PC-3 (cell line): ENCODE measurements at regions of chr3 and their contacts with region 1.

Region 1: DNA sequence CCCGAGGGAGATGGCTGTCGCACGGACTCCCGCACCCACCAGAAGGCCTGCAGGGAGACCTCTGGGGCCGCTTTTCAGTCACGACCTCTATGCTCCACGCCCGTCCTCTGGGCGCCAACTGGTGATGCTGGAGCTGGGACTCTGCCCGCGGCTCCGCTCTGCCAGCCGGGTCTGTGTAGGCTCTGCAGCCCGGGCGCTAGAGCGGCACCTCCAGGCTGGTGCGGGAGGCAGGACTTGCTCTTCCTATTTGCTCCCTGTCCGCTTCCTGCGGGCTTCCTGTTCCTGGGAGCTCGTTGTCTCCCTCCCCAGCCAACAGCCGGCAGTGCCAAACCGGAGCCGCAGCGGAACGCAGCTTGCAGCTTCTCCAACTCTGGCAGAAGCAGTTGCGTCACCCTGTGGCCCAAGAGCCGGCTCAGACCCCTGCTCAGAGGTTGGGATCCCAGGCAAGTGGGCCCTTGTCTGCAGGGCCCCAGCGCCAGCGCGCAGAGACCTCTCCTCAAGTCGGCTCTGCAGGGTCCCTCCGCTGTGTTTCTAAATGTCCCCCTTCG is 285.9 kb downstream of the XXYLT1 start:
- DNase-seq: peak; percentile 86
- ATAC-seq: peak; percentile 84
- H3K4me3 ChIP-seq: peak overlapping the region; percentile 51; the same call in 1 of the 2 replicates
- H3K27ac ChIP-seq: peak overlapping the region; percentile 10; the same call in 1 of the 2 replicates
- H3K4me1 ChIP-seq: peaks cover 43% of the 10 kb centered on the region
- H3K27me3 ChIP-seq: no peaks in the 10 kb centered on the region
- CTCF ChIP-seq: peak; percentile 68

Region 2: GRCh38 chr3:194583604-194584318 is 401.3 kb before region 1 on chr3:
- CTCF ChIA-PET with region 1: no interaction called
- POLR2A ChIA-PET with region 1: no interaction called
- intact Hi-C with region 1: no loop called
- DNase-seq: peak; percentile 96
- ATAC-seq: peak; percentile 82
- H3K4me3 ChIP-seq: peak overlapping the region; percentile 98
- H3K27ac ChIP-seq: peak overlapping the region; percentile 82
- H3K4me1 ChIP-seq: peaks cover 39% of the 10 kb centered on the region
- H3K27me3 ChIP-seq: no peaks in the 10 kb centered on the region
- CTCF ChIP-seq: no peak

Region 3: GRCh38 chr3:194906229-194906629 is 78.9 kb before region 1 on chr3:
- CTCF ChIA-PET with region 1: no interaction called
- POLR2A ChIA-PET with region 1: no interaction called
- intact Hi-C with region 1: loop called (anchors 1 kb)
- DNase-seq: peak; percentile 82
- ATAC-seq: peak; percentile 98
- H3K4me3 ChIP-seq: no peak overlapping the region
- H3K27ac ChIP-seq: peak overlapping the region; percentile 75
- H3K4me1 ChIP-seq: peaks cover 22% of the 10 kb centered on the region
- H3K27me3 ChIP-seq: no peaks in the 10 kb centered on the region
- CTCF ChIP-seq: no peak

Region 4: GRCh38 chr3:195133462-195133861 is 148.4 kb after region 1 on chr3:
- CTCF ChIA-PET with region 1: no interaction called
- POLR2A ChIA-PET with region 1: no interaction called
- intact Hi-C with region 1: no loop called
- DNase-seq: no peak
- ATAC-seq: no peak
- H3K4me3 ChIP-seq: no peak overlapping the region
- H3K27ac ChIP-seq: no peak overlapping the region
- H3K4me1 ChIP-seq: no peaks in the 10 kb centered on the region
- H3K27me3 ChIP-seq: no peaks in the 10 kb centered on the region
- CTCF ChIP-seq: no peak